ENCODE measurements at regions of chr2 and their contacts with region 1.

Region 1: GRCh38 chr2:147844697-147845410 is at the start of gene ACVR2A:
- DNase-seq: peak; percentile 27
- H3K4me3 Mint-ChIP-seq: peak within 1 kb of the TSS; percentile 83
- H3K27ac Mint-ChIP-seq: peak within 1 kb of the TSS; percentile 60
- H3K4me1 Mint-ChIP-seq: peaks cover 37% of the 10 kb centered on the region
- H3K27me3 Mint-ChIP-seq: no peaks in the 10 kb centered on the region
- CTCF ChIP-seq: no peak
- total RNA-seq, gene ACVR2A: 12.5 and 14.8 TPM in 2 replicates

Region 2: DNA sequence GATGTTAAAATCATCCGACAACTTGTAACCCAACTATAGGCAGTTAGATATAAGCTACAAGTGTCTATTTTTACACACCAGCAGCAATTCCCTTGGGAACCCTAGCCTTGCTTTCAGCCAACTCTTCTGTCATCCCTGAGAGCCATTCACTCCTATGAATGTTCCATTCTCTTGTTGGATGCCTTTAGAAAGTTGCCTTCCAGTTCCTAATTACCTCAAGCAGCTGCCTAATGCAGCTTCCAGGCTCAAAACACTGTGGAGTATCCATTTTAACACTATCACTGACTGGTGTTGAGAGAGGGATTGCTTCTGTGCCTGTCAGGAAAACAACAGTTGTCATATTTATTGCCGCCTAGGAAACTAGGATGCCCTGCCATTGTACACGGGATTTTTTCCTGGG is 402.0 kb before region 1 on chr2:
- CTCF ChIA-PET with region 1: no interaction called
- intact Hi-C with region 1: no loop called
- DNase-seq: no peak
- H3K4me3 Mint-ChIP-seq: no peak overlapping the region
- H3K27ac Mint-ChIP-seq: no peak overlapping the region
- H3K4me1 Mint-ChIP-seq: peaks cover 6% of the 10 kb centered on the region
- H3K27me3 Mint-ChIP-seq: no peaks in the 10 kb centered on the region
- CTCF ChIP-seq: no peak

Region 3: GRCh38 chr2:147610496-147611040 is 234.3 kb before region 1 on chr2:
- CTCF ChIA-PET with region 1: no interaction called
- intact Hi-C with region 1: loop called (anchors 5 kb)
- DNase-seq: no peak
- H3K4me3 Mint-ChIP-seq: no peak overlapping the region
- H3K27ac Mint-ChIP-seq: no peak overlapping the region
- H3K4me1 Mint-ChIP-seq: no peaks in the 10 kb centered on the region
- H3K27me3 Mint-ChIP-seq: no peaks in the 10 kb centered on the region
- CTCF ChIP-seq: no peak

Region 4: GRCh38 chr2:148259674-148260073 is 414.8 kb after region 1 on chr2:
- CTCF ChIA-PET with region 1: no interaction called
- intact Hi-C with region 1: no loop called
- DNase-seq: no peak
- H3K4me3 Mint-ChIP-seq: no peak overlapping the region
- H3K27ac Mint-ChIP-seq: no peak overlapping the region
- H3K4me1 Mint-ChIP-seq: no peaks in the 10 kb centered on the region
- H3K27me3 Mint-ChIP-seq: no peaks in the 10 kb centered on the region
- CTCF ChIP-seq: no peak